ENCODE measurements at regions of chr3 and their contacts with region 1.

Region 1: DNA sequence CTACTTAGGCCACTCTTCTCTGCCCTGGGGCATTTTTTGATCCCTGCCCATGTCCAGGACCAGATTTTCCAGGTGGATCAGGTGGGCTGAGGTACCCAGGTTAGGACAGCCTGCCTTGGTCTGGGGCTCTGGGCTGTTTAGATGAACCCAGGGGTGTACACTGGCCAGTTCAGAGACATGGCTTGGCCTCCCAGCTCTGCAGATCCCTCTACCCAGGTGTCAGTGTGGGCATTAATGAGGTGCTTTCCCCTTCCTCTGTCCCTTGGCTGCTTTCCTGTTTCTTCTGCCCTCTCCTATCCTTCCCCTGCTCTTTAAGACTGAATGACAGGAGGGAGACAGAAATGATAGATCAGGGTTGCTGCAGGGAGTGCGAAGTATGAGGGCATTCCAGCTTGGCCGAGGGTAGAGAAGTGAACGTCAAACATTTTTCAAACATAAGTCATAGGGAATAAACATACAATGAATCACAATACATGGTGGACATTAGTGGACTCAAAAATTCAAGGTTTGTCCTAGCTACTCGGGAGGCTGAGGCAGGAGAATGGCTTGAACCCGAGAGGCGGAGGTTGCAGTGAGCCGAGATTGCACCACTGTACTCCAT is 30.5 kb downstream of the RTP1 start:
- DNase-seq: peak; percentile 58
- H3K4me3 ChIP-seq: no peak overlapping the region
- H3K27me3 ChIP-seq: no peaks in the 10 kb centered on the region
- CTCF ChIP-seq: no peak

Region 2: DNA sequence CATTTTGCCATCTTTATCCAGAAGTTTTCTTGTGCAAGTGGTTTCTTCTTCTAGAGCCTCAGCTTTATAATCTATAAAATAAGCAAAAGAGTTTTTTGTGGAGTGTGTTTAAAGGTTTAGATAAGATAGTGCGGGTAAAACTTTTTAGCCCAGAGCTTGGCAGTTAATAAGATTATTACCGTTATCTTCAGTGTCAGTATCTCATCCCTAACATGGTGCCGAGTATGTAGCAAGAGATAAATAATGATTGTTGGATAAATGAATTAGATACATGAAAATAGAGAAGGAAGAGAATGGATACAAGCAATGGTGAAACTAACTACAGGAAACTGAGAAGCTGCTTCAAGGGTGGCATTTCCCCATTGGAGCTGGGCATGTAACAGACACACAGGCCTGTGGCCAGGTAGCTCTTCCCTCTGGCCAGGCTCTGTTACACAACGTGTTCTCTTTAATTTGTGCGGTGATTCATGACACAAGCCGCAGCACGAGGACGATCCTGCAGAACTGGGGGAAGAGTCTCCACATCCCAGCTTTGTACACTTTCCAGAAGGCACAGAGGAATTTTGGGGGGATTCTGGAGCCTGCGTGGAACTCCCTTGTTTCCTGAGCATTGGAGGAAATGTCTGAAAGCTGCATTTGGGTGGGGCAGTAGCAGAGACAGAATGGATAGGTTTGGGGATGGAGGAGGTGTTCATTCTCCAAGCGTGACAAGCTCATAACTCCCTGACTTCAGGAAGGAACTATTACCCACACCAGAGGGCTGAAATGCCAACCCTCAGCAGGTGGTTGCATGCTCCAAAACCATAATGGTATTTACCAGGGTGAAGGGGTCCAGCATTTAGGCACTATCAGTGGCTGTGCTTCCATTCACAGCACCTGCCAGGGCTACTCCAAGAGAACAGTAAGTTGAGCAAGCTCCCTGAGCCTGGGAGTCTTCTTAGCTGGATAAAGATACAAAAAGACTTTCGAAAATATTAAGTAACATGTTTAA is 311.7 kb before region 1 on chr3:
- CTCF ChIA-PET with region 1: no interaction called
- POLR2A ChIA-PET with region 1: interaction called, 15 read pairs
- DNase-seq: no peak
- H3K4me3 ChIP-seq: no peak overlapping the region
- H3K27me3 ChIP-seq: peaks cover 5% of the 10 kb centered on the region
- CTCF ChIP-seq: no peak

Region 3: GRCh38 chr3:187640569-187641059 is 412.9 kb after region 1 on chr3:
- CTCF ChIA-PET with region 1: no interaction called
- POLR2A ChIA-PET with region 1: no interaction called
- DNase-seq: no peak
- H3K4me3 ChIP-seq: no peak overlapping the region
- H3K27me3 ChIP-seq: no peaks in the 10 kb centered on the region
- CTCF ChIP-seq: no peak

Measured in BJ (cell line).